Activated CD8-positive, alpha-beta T cell treated with anti-CD3 and anti-CD28 coated beads for 36 hours (primary cell): ENCODE measurements at regions of chr6 and their contacts with region 1.

Region 1: DNA sequence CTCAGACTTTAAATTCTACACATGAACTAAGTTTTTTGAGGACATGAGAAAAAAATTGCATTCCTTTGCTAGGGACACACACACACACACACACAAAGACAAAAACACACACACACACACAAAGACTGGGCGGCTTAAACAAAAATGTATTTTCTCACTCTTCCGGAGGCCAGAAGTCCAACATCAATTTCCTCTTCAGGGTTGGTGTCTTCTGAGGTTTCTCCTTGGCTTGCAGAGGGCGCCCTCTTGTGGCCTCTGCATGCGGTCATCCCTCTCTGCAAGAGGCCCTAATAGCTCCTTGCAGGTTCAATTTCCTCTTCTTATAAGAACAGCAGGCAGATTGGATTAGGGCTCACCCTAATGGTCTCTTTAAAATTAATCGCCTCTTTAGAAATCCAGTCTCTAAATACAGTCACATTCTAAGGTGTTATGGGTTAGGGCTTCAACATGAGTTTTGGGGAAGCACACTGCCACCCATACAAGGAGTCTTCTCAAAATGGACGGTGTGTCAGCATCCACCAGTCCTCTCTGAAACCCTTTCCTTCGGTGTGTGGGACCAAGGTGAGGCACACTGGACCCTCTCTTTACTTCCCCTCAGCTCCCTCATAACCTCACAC is 61.4 kb downstream of the GPR6 start:
- DNase-seq: peak; percentile 93
- ATAC-seq: peak; percentile 85
- H3K4me3 Mint-ChIP-seq: peak overlapping the region; percentile 78
- H3K27ac Mint-ChIP-seq: peak overlapping the region; percentile 96
- H3K4me1 Mint-ChIP-seq: peaks cover 19% of the 10 kb centered on the region
- H3K27me3 Mint-ChIP-seq: no peaks in the 10 kb centered on the region
- CTCF ChIP-seq: peak; percentile 55

Region 2: GRCh38 chr6:109526905-109527628 is 512.4 kb before region 1 on chr6:
- CTCF ChIA-PET with region 1: interaction called, 57 read pairs
- POLR2A ChIA-PET with region 1: interaction called, 3 read pairs
- intact Hi-C with region 1: loop called (anchors 2 kb)
- DNase-seq: peak; percentile 70
- ATAC-seq: peak; percentile 90
- H3K4me3 Mint-ChIP-seq: no peak overlapping the region
- H3K27ac Mint-ChIP-seq: no peak overlapping the region
- H3K4me1 Mint-ChIP-seq: peaks cover 2% of the 10 kb centered on the region
- H3K27me3 Mint-ChIP-seq: no peaks in the 10 kb centered on the region
- CTCF ChIP-seq: peak; percentile 72

Region 3: DNA sequence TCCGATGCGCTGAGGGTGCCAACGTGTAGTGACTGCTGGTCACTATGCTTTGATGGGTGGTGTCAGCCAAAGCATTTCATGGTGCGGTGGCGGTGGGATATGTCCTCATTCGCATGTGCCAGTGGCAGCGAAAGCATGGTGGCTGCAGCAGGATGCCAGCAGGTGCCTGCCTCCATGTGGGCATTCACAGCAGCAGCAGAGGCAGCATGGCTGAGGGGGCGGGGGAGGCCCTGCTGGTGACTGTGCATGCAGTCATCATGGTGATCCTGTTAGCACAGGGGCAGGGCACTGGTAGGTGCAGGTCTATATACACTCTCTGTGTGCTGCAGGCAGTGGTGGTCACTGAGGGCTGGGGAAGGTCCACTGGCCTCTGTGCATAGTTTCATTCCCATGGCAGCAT is 326.4 kb before region 1 on chr6:
- CTCF ChIA-PET with region 1: interaction called, 29 read pairs
- POLR2A ChIA-PET with region 1: no interaction called
- intact Hi-C with region 1: no loop called
- DNase-seq: peak; percentile 55
- ATAC-seq: peak; percentile 51
- H3K4me3 Mint-ChIP-seq: no peak overlapping the region
- H3K27ac Mint-ChIP-seq: no peak overlapping the region
- H3K4me1 Mint-ChIP-seq: peaks cover 11% of the 10 kb centered on the region
- H3K27me3 Mint-ChIP-seq: no peaks in the 10 kb centered on the region
- CTCF ChIP-seq: no peak

Region 4: DNA sequence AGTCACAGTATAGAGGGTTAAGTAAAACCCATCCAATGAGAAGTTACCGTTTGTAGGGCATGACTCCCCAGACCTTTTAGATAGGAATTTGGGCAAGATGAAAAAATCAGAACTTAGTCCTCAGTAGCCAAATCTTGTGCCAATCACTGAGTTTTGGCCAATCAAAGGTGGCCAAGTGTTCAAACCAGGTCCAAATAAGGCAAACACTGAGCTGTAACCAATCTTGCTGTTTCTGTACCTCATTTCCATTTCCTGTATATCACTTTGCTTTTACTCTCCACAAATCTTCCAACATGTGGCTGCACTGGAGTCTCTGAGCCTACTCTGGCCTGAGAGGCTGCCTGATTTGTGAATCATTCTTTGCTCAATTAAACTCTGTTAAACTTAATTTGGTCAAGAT is 143.1 kb before region 1 on chr6:
- CTCF ChIA-PET with region 1: no interaction called
- POLR2A ChIA-PET with region 1: no interaction called
- intact Hi-C with region 1: no loop called
- DNase-seq: no peak
- ATAC-seq: no peak
- H3K4me3 Mint-ChIP-seq: no peak overlapping the region
- H3K27ac Mint-ChIP-seq: no peak overlapping the region
- H3K4me1 Mint-ChIP-seq: no peaks in the 10 kb centered on the region
- H3K27me3 Mint-ChIP-seq: peaks cover 11% of the 10 kb centered on the region
- CTCF ChIP-seq: no peak

Region 5: GRCh38 chr6:109998159-109998785 is 41.2 kb before region 1 on chr6:
- CTCF ChIA-PET with region 1: interaction called, 14 read pairs
- POLR2A ChIA-PET with region 1: no interaction called
- intact Hi-C with region 1: no loop called
- DNase-seq: no peak
- ATAC-seq: no peak
- H3K4me3 Mint-ChIP-seq: no peak overlapping the region
- H3K27ac Mint-ChIP-seq: no peak overlapping the region
- H3K4me1 Mint-ChIP-seq: no peaks in the 10 kb centered on the region
- H3K27me3 Mint-ChIP-seq: peaks cover 30% of the 10 kb centered on the region
- CTCF ChIP-seq: no peak

Region 6: GRCh38 chr6:110029144-110029543 is 10.3 kb before region 1 on chr6:
- CTCF ChIA-PET with region 1: interaction called, 49 read pairs
- POLR2A ChIA-PET with region 1: interaction called, 3 read pairs
- intact Hi-C with region 1: no loop called
- DNase-seq: no peak
- ATAC-seq: no peak
- H3K4me3 Mint-ChIP-seq: no peak overlapping the region
- H3K27ac Mint-ChIP-seq: no peak overlapping the region
- H3K4me1 Mint-ChIP-seq: no peaks in the 10 kb centered on the region
- H3K27me3 Mint-ChIP-seq: no peaks in the 10 kb centered on the region
- CTCF ChIP-seq: no peak

Region 7: GRCh38 chr6:110158479-110158878 is 119.0 kb after region 1 on chr6:
- CTCF ChIA-PET with region 1: no interaction called
- POLR2A ChIA-PET with region 1: no interaction called
- intact Hi-C with region 1: no loop called
- DNase-seq: no peak
- ATAC-seq: no peak
- H3K4me3 Mint-ChIP-seq: no peak overlapping the region
- H3K27ac Mint-ChIP-seq: no peak overlapping the region
- H3K4me1 Mint-ChIP-seq: no peaks in the 10 kb centered on the region
- H3K27me3 Mint-ChIP-seq: peaks cover 7% of the 10 kb centered on the region
- CTCF ChIP-seq: no peak

Region 8: GRCh38 chr6:110389689-110390382 is 350.4 kb after region 1 on chr6:
- CTCF ChIA-PET with region 1: interaction called, 86 read pairs
- POLR2A ChIA-PET with region 1: interaction called, 4 read pairs
- intact Hi-C with region 1: no loop called
- DNase-seq: peak; percentile 16
- ATAC-seq: peak; percentile 40
- H3K4me3 Mint-ChIP-seq: no peak overlapping the region
- H3K27ac Mint-ChIP-seq: peak overlapping the region; percentile 79
- H3K4me1 Mint-ChIP-seq: peaks cover 25% of the 10 kb centered on the region
- H3K27me3 Mint-ChIP-seq: no peaks in the 10 kb centered on the region
- CTCF ChIP-seq: no peak